CD4-positive, alpha-beta memory T cell (primary cell): ENCODE measurements at regions of chr7 and their contacts with region 1.

Region 1: GRCh38 chr7:87312215-87312865 is 33.1 kb upstream of the CROT start:
- DNase-seq: peak; percentile 52 to 68 (median 62)
- H3K4me3 ChIP-seq: no peak overlapping the region
- H3K4me3 Mint-ChIP-seq: no peak overlapping the region
- H3K27ac ChIP-seq: no peak overlapping the region
- H3K27ac Mint-ChIP-seq: peak overlapping the region in 1 of 7 donors; percentile 27
- H3K4me1 ChIP-seq: peaks cover 6% of the 10 kb centered on the region
- H3K4me1 Mint-ChIP-seq: peaks cover 3 to 7% (median 5%) of the 10 kb centered on the region in 4 donors
- H3K27me3 ChIP-seq: no peaks in the 10 kb centered on the region
- H3K27me3 Mint-ChIP-seq: peaks cover 0 to 3% of the 10 kb centered on the region in 2 donors

Region 2: DNA sequence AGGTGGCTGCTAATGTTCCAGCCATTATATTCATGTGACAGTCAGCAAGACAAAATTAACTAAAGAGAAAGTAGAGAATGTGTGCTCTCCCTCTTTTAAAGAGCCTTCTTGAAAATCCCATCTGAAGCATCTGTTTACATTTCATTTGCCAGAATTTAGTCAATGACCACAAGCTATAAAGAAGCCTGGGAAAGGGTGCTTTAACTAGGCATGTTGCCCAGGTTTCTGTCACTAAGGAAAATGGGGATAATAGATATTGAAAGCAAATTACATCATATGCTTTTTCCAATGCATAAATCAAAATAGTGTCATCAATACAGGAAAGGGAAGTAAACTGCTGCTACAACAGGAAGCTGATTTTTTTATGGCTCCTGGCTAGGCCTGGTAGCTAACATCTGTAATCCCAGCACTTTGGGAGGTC is 320.6 kb before region 1 on chr7:
- CTCF ChIA-PET with region 1: no interaction called
- POLR2A ChIA-PET with region 1: no interaction called
- intact Hi-C with region 1: no loop called
- DNase-seq: no peak
- H3K4me3 ChIP-seq: no peak overlapping the region
- H3K4me3 Mint-ChIP-seq: no peak overlapping the region
- H3K27ac ChIP-seq: no peak overlapping the region
- H3K27ac Mint-ChIP-seq: peak overlapping the region in 1 of 7 donors; percentile 81
- H3K4me1 ChIP-seq: peaks cover 4% of the 10 kb centered on the region
- H3K4me1 Mint-ChIP-seq: peaks cover 3 to 16% (median 10%) of the 10 kb centered on the region in 4 donors
- H3K27me3 ChIP-seq: no peaks in the 10 kb centered on the region
- H3K27me3 Mint-ChIP-seq: peaks cover 4 to 6% of the 10 kb centered on the region in 2 donors

Region 3: DNA sequence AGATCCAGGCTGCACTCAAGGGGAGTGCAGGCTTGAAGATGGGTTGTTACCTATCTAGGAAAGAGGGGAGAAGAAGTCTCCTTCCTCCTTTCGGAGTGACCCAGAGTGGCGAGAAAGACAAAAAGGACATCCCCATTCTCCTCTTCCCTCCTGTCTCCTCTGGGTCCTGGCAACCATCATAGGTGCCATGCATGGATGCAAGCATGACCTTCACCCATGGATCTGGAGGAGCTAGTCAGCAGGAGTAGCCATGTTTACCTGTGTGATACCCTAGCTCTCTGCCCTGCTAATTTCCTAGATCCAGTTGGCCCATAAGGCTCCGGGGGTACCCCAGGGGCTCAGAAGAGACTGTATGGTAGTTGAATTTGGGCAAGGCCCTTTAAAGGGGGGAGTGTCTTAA is 15.9 kb after region 1 on chr7:
- CTCF ChIA-PET with region 1: interaction called, 8 read pairs
- POLR2A ChIA-PET with region 1: no interaction called
- intact Hi-C with region 1: loop called (anchors 1 kb)
- DNase-seq: no peak
- H3K4me3 ChIP-seq: no peak overlapping the region
- H3K4me3 Mint-ChIP-seq: no peak overlapping the region
- H3K27ac ChIP-seq: no peak overlapping the region
- H3K27ac Mint-ChIP-seq: no peak overlapping the region
- H3K4me1 ChIP-seq: no peaks in the 10 kb centered on the region
- H3K4me1 Mint-ChIP-seq: no peaks in the 10 kb centered on the region
- H3K27me3 ChIP-seq: no peaks in the 10 kb centered on the region
- H3K27me3 Mint-ChIP-seq: no peaks in the 10 kb centered on the region

Region 4: DNA sequence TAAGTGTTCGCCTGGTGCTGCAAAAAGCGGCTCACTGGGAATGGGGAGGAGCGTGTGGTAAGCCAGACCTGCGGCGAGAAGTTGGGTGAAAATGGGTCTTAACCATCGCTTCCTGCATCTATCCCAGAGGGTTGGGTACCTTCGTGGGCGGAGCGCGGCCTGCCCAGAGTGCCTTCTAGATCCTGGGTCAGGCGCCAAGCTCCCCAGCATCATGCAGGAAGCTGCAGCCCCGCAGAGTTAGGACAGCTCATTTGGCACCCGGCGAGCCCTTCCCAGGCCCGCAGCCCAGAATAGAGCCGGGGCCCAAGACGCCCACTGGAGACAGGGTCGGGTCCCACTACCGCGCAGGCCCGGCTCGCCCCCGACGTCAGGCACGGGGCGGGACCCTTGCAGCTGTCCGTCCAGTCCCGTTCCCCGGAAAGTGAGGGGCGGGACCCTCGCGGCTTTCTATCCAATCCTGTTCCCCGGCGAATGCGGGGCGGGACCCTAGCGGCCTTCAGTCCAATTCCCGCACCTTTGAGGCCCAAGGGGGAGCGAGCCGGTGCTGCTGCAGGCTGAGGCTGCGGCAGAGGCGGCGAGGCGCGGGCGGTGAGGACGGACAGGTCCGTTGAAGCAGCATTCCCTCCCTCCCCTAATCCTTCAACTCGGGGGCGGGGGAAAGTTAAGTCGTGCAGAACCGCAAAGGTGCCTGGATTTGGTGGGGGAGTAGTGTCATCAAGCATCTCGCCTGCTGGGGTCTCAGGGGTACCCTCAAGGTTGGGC is 33.0 kb after region 1 on chr7 and contains the start of gene CROT:
- CTCF ChIA-PET with region 1: interaction called, 9 read pairs
- POLR2A ChIA-PET with region 1: interaction called, 26 read pairs
- intact Hi-C with region 1: loop called (anchors 2 kb)
- DNase-seq: peak; percentile 91 to 94 (median 92)
- H3K4me3 ChIP-seq: peak within 1 kb of the TSS; percentile 13 to 73
- H3K4me3 Mint-ChIP-seq: peak within 1 kb of the TSS; percentile 89 to 97 (median 96)
- H3K27ac ChIP-seq: peak within 1 kb of the TSS; percentile 80
- H3K27ac Mint-ChIP-seq: peak within 1 kb of the TSS; percentile 94 to 98 (median 95)
- H3K4me1 ChIP-seq: peaks cover 44% of the 10 kb centered on the region
- H3K4me1 Mint-ChIP-seq: peaks cover 33 to 57% (median 46%) of the 10 kb centered on the region in 4 donors
- H3K27me3 ChIP-seq: no peaks in the 10 kb centered on the region
- H3K27me3 Mint-ChIP-seq: no peaks in the 10 kb centered on the region
- total RNA-seq, gene CROT: 17.8 to 19.0 TPM

Region 5: GRCh38 chr7:87380905-87381304 is 68.6 kb after region 1 on chr7:
- CTCF ChIA-PET with region 1: interaction called, 10 read pairs
- POLR2A ChIA-PET with region 1: no interaction called
- intact Hi-C with region 1: no loop called
- DNase-seq: no peak
- H3K4me3 ChIP-seq: no peak overlapping the region
- H3K4me3 Mint-ChIP-seq: no peak overlapping the region
- H3K27ac ChIP-seq: no peak overlapping the region
- H3K27ac Mint-ChIP-seq: no peak overlapping the region
- H3K4me1 ChIP-seq: no peaks in the 10 kb centered on the region
- H3K4me1 Mint-ChIP-seq: no peaks in the 10 kb centered on the region
- H3K27me3 ChIP-seq: no peaks in the 10 kb centered on the region
- H3K27me3 Mint-ChIP-seq: no peaks in the 10 kb centered on the region

Region 6: DNA sequence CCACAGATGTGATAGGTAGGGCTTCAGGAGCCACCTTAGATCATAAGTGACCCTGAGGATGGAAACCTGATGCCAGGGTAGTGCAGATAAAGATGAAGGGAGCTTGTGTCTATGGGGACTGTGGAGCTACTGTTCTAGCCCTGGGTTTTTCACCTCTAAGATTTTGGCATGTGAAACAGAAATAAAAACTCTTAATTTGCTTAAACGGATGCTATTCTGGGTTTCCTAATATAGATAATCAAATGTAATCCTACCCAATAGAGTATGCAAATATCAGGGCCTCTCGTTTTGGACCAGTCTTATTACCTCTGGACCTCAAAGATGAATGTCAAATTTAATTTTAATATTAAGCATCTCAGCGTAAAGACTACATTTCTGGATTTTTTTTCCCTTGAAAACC is 113.8 kb after region 1 on chr7:
- CTCF ChIA-PET with region 1: interaction called, 11 read pairs
- POLR2A ChIA-PET with region 1: no interaction called
- intact Hi-C with region 1: no loop called
- DNase-seq: no peak
- H3K4me3 ChIP-seq: no peak overlapping the region
- H3K4me3 Mint-ChIP-seq: no peak overlapping the region
- H3K27ac ChIP-seq: no peak overlapping the region
- H3K27ac Mint-ChIP-seq: no peak overlapping the region
- H3K4me1 ChIP-seq: no peaks in the 10 kb centered on the region
- H3K4me1 Mint-ChIP-seq: no peaks in the 10 kb centered on the region
- H3K27me3 ChIP-seq: no peaks in the 10 kb centered on the region
- H3K27me3 Mint-ChIP-seq: peaks cover 7 to 19% of the 10 kb centered on the region in 2 donors

Region 7: GRCh38 chr7:87886875-87887274 is 574.5 kb after region 1 on chr7:
- CTCF ChIA-PET with region 1: interaction called, 6 read pairs
- POLR2A ChIA-PET with region 1: no interaction called
- intact Hi-C with region 1: loop called (anchors 2 kb)
- DNase-seq: peak in 4 of 5 donors; percentile 41 to 50 (median 44)
- H3K4me3 ChIP-seq: no peak overlapping the region
- H3K4me3 Mint-ChIP-seq: no peak overlapping the region
- H3K27ac ChIP-seq: no peak overlapping the region
- H3K27ac Mint-ChIP-seq: no peak overlapping the region
- H3K4me1 ChIP-seq: no peaks in the 10 kb centered on the region
- H3K4me1 Mint-ChIP-seq: peaks cover 0 to 14% (median 11%) of the 10 kb centered on the region in 4 donors
- H3K27me3 ChIP-seq: no peaks in the 10 kb centered on the region
- H3K27me3 Mint-ChIP-seq: no peaks in the 10 kb centered on the region

Region 8: GRCh38 chr7:88546808-88547207 is 1234.5 kb after region 1 on chr7:
- CTCF ChIA-PET with region 1: no interaction called
- POLR2A ChIA-PET with region 1: no interaction called
- intact Hi-C with region 1: no loop called
- DNase-seq: peak in 3 of 5 donors; percentile 2 to 9 (median 6)
- H3K4me3 ChIP-seq: no peak overlapping the region
- H3K4me3 Mint-ChIP-seq: no peak overlapping the region
- H3K27ac ChIP-seq: no peak overlapping the region
- H3K27ac Mint-ChIP-seq: no peak overlapping the region
- H3K4me1 ChIP-seq: no peaks in the 10 kb centered on the region
- H3K4me1 Mint-ChIP-seq: no peaks in the 10 kb centered on the region
- H3K27me3 ChIP-seq: no peaks in the 10 kb centered on the region
- H3K27me3 Mint-ChIP-seq: no peaks in the 10 kb centered on the region